ENCODE measurements at regions of chr5 and their contacts with region 1.

Region 1: GRCh38 chr5:105101597-105101996 is 1539.0 kb upstream of the NUDT12 start:
- DNase-seq: no peak
- H3K4me3 ChIP-seq: no peak overlapping the region
- H3K27ac ChIP-seq: no peak overlapping the region
- H3K4me1 ChIP-seq: no peaks in the 10 kb centered on the region
- H3K27me3 ChIP-seq: no peaks in the 10 kb centered on the region
- CTCF ChIP-seq: no peak

Region 2: DNA sequence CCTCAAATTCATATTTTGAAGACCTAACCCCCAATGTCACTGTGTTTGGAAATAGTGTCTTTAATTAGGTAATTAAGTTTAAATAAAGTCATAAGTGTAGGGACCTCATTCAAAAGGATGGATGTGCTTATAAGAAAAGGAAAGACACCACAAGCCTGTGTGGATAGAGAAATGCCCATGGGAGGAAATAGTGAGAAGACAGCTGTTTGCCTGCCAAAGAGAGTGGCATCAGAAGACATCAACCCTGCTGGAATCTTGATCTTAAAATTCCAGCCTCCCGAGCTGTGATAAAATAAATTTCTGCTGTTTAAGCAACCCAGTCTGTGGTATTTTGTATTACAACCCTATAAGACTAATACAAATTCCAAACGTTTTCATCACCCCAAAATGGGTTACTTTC is 328.9 kb after region 1 on chr5:
- CTCF ChIA-PET with region 1: no interaction called
- POLR2A ChIA-PET with region 1: interaction called, 12 read pairs
- intact Hi-C with region 1: no loop called
- DNase-seq: no peak
- H3K4me3 ChIP-seq: no peak overlapping the region
- H3K27ac ChIP-seq: no peak overlapping the region
- H3K4me1 ChIP-seq: no peaks in the 10 kb centered on the region
- H3K27me3 ChIP-seq: no peaks in the 10 kb centered on the region
- CTCF ChIP-seq: no peak

Region 3: DNA sequence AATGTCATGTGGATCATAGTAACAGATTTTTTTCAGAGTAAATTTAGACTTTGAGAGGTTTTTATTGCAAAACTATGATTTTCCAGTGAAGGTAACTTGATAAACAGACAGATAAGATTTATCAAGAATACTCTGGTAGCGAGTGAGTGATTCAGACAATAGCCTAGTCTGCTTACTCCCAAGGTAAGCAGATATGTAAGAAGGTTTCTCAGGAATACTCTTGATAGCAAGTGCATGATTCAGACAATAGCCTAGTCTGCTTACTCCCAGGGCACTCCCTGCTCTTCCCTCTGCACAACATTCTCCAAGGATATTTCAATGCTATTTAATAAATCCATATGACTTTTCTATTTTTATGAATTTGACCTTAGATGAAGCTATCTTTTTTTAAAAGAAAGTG is 687.6 kb after region 1 on chr5:
- CTCF ChIA-PET with region 1: no interaction called
- POLR2A ChIA-PET with region 1: no interaction called
- intact Hi-C with region 1: no loop called
- DNase-seq: no peak
- H3K4me3 ChIP-seq: no peak overlapping the region
- H3K27ac ChIP-seq: no peak overlapping the region
- H3K4me1 ChIP-seq: no peaks in the 10 kb centered on the region
- H3K27me3 ChIP-seq: no peaks in the 10 kb centered on the region
- CTCF ChIP-seq: no peak